ENCODE measurements at regions of chr12 and their contacts with region 1.

Region 1: DNA sequence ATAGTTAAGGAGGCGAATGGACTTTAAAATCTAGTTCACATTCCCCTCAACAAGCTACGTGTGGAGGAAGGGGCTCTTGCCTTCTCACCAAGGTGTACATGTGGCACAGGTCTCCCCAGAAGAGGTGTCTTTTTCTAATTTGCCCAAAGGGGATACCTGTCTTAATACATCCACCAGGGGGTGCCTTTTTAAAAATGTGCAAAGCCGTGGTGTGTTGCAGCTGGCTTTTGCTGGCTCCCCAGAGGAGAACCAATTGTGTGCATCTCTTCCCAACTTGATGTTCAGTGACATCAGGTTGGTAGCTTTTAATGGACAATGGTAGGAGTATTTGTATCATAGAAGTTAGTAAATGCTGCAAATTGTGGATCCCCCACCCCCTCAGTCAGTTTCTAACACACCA is 33.8 kb downstream of the CREBL2 start:
- DNase-seq: no peak
- ATAC-seq: peak; percentile 92
- H3K4me3 Mint-ChIP-seq: no peak overlapping the region
- H3K27ac Mint-ChIP-seq: no peak overlapping the region
- H3K4me1 Mint-ChIP-seq: peaks cover 9% of the 10 kb centered on the region
- H3K27me3 Mint-ChIP-seq: no peaks in the 10 kb centered on the region
- CTCF ChIP-seq: no peak

Region 2: GRCh38 chr12:12704593-12705230 is 59.2 kb after region 1 on chr12:
- CTCF ChIA-PET with region 1: interaction called, 9 read pairs
- POLR2A ChIA-PET with region 1: no interaction called
- intact Hi-C with region 1: loop called (anchors 1 kb)
- DNase-seq: no peak
- ATAC-seq: peak; percentile 87
- H3K4me3 Mint-ChIP-seq: no peak overlapping the region
- H3K27ac Mint-ChIP-seq: no peak overlapping the region
- H3K4me1 Mint-ChIP-seq: peaks cover 9% of the 10 kb centered on the region
- H3K27me3 Mint-ChIP-seq: no peaks in the 10 kb centered on the region
- CTCF ChIP-seq: no peak

Region 3: GRCh38 chr12:12736759-12737676 is 91.5 kb after region 1 on chr12:
- CTCF ChIA-PET with region 1: interaction called, 129 read pairs
- POLR2A ChIA-PET with region 1: interaction called, 20 read pairs
- intact Hi-C with region 1: loop called (anchors 1 kb)
- DNase-seq: peak; percentile 19
- ATAC-seq: peak; percentile 91
- H3K4me3 Mint-ChIP-seq: peak overlapping the region; percentile 30
- H3K27ac Mint-ChIP-seq: peak overlapping the region; percentile 72
- H3K4me1 Mint-ChIP-seq: peaks cover 13% of the 10 kb centered on the region
- H3K27me3 Mint-ChIP-seq: no peaks in the 10 kb centered on the region
- CTCF ChIP-seq: peak; percentile 19

Measured in activated B cell treated with CpG ODN at 0.5 μM for 24 hours (primary cell).